ENCODE measurements at regions of chr3 and their contacts with region 1.

Region 1: GRCh38 chr3:14203521-14204079 is 25.0 kb downstream of the LSM3 start:
- DNase-seq: peak; percentile 75
- H3K4me3 Mint-ChIP-seq: no peak overlapping the region
- H3K27ac Mint-ChIP-seq: no peak overlapping the region
- H3K4me1 Mint-ChIP-seq: peaks cover 24% of the 10 kb centered on the region
- H3K27me3 Mint-ChIP-seq: no peaks in the 10 kb centered on the region
- CTCF ChIP-seq: peak; percentile 68

Region 2: DNA sequence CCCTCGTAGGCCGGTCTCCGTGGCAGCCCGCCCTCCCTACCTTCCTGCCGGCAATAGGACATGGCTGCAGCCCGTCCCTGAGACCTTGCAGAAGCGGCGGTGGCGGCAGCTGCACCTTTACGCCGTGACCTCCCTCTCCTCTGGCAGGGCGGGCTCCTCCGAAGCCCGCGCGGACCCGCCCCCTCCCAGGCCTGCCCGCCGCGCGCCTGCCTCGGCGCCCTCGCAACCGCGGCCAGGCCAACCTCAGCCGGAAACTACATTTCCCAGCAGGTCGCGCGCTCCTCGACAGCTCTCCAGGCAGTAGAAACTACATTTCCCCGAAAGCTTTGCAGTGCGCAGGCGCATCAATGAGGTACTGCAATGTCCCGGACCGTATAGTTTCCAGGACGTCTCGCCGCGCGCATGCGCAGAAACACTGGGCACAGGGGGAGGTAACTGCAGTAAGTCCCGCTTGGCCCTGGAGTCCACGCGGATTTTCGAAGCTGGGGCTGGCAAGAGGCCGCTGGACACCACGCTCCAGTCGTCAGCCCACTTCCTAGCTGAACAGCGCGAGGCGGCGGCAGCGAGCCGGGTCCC is 78.9 kb before region 1 on chr3 and contains the starts of genes CHCHD4 and TMEM43:
- CTCF ChIA-PET with region 1: no interaction called
- POLR2A ChIA-PET with region 1: interaction called, 27 read pairs
- intact Hi-C with region 1: no loop called
- DNase-seq: peak; percentile 99
- H3K4me3 Mint-ChIP-seq: peak within 1 kb of the TSS; percentile 99
- H3K27ac Mint-ChIP-seq: peak within 1 kb of the TSS; percentile 96
- H3K4me1 Mint-ChIP-seq: peaks cover 30% of the 10 kb centered on the region
- H3K27me3 Mint-ChIP-seq: no peaks in the 10 kb centered on the region
- CTCF ChIP-seq: no peak
- total RNA-seq, gene CHCHD4: 31.6 and 35.0 TPM in 2 replicates
- total RNA-seq, gene TMEM43: 120 and 124 TPM in 2 replicates

Region 3: GRCh38 chr3:14228648-14229470 is 25.3 kb after region 1 on chr3:
- CTCF ChIA-PET with region 1: interaction called, 21 read pairs
- POLR2A ChIA-PET with region 1: interaction called, 7 read pairs
- intact Hi-C with region 1: no loop called
- DNase-seq: no peak
- H3K4me3 Mint-ChIP-seq: no peak overlapping the region
- H3K27ac Mint-ChIP-seq: no peak overlapping the region
- H3K4me1 Mint-ChIP-seq: peaks cover 5% of the 10 kb centered on the region
- H3K27me3 Mint-ChIP-seq: no peaks in the 10 kb centered on the region
- CTCF ChIP-seq: no peak

Region 4: DNA sequence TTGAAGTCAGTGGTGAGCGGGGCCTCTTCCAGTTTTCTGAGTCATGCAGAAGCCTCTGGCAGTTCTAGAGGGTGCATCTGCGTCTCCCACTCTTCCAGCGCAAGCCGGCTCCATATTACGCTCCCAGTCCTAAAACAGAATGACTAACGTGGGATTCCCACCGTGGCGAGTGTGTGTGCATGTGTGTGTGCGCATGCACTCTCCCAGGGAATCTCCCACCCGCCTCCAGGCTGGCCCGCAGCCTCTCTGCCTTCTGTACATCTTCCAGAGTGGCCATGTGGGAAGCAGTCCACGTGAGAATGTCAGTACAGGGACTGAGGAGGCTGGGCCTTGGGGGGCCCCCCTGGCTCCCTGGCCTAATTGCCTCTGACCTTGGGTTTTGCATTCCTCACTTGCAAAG is 62.8 kb after region 1 on chr3:
- CTCF ChIA-PET with region 1: interaction called, 103 read pairs
- POLR2A ChIA-PET with region 1: interaction called, 4 read pairs
- intact Hi-C with region 1: loop called (anchors 1 kb)
- DNase-seq: no peak
- H3K4me3 Mint-ChIP-seq: no peak overlapping the region
- H3K27ac Mint-ChIP-seq: no peak overlapping the region
- H3K4me1 Mint-ChIP-seq: peaks cover 13% of the 10 kb centered on the region
- H3K27me3 Mint-ChIP-seq: peaks cover 29% of the 10 kb centered on the region
- CTCF ChIP-seq: no peak

Region 5: GRCh38 chr3:14307656-14308302 is 104.2 kb after region 1 on chr3:
- CTCF ChIA-PET with region 1: no interaction called
- POLR2A ChIA-PET with region 1: no interaction called
- intact Hi-C with region 1: no loop called
- DNase-seq: no peak
- H3K4me3 Mint-ChIP-seq: no peak overlapping the region
- H3K27ac Mint-ChIP-seq: no peak overlapping the region
- H3K4me1 Mint-ChIP-seq: no peaks in the 10 kb centered on the region
- H3K27me3 Mint-ChIP-seq: peaks cover 84% of the 10 kb centered on the region
- CTCF ChIP-seq: no peak

Region 6: DNA sequence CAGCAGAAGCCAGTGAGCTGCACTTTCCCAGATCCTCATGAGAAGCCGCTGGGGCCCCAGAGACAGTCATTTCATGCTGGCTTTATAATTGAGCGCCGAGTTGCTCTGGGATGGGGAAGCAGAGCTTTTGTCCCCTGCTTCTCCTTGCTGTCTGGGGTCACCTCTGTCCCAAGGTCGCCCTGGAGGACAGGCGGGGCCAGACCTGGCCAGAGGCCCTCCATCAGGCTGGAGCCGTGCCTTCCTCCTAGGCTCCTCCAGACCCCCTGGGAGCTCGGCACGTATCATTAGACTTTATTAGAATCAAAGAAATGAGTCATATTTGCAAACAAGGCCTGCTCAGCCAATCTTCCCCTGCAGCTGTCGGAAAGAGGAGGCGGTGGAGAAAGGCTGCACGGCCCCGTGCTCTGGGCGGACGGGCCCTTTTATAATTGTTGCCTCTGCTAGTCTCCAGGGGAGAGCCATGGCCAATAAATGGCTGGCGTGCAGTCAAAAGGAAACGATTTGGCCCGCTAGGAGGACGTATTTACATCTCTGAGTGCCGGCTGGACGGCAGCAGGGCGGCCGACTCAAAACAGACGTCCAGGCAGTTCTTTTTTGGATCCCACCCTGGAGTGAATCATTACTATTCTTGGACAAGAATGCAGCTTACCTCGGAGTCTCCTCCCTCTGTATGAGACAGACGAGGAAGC is 249.2 kb after region 1 on chr3:
- CTCF ChIA-PET with region 1: interaction called, 138 read pairs
- POLR2A ChIA-PET with region 1: interaction called, 4 read pairs
- intact Hi-C with region 1: no loop called
- DNase-seq: peak; percentile 88
- H3K4me3 Mint-ChIP-seq: no peak overlapping the region
- H3K27ac Mint-ChIP-seq: peak overlapping the region; percentile 67
- H3K4me1 Mint-ChIP-seq: peaks cover 17% of the 10 kb centered on the region
- H3K27me3 Mint-ChIP-seq: no peaks in the 10 kb centered on the region
- CTCF ChIP-seq: no peak

Region 7: DNA sequence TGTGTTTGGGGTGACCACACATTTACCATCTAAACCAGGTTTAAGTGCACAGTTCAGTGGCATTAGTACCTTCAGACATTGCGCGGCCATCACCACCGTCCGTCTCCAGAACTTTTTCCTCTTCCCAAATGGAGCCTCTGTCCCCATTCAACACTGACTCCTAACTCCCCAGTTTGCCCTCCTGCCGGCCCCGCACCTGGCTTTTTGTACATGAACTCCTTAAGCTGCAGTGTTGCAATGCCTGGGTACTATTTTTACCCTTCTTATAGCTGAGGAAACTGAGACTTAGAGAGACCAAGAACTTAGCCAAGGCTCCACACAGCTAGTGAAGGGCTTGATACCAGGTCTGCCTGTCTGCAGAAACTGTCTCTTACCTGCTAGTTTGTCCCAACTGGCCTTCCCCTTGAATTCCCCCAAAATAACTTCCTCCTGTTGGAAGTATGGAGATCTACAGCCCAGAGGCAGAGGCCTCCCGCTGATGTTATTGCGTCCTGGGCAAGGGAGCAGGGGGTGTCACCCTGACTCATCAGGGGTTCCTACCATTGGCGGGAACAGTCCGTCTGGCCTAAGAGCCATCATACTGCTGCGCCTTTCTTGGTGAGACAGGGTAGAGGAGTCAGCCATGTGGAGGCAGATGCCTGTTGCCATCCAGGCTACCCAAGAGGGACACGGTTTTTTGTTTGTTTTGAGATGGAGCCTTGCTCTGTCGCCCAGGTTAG is 270.9 kb after region 1 on chr3:
- CTCF ChIA-PET with region 1: interaction called, 10 read pairs
- POLR2A ChIA-PET with region 1: no interaction called
- intact Hi-C with region 1: no loop called
- DNase-seq: no peak
- H3K4me3 Mint-ChIP-seq: no peak overlapping the region
- H3K27ac Mint-ChIP-seq: no peak overlapping the region
- H3K4me1 Mint-ChIP-seq: peaks cover 14% of the 10 kb centered on the region
- H3K27me3 Mint-ChIP-seq: no peaks in the 10 kb centered on the region
- CTCF ChIP-seq: no peak